GM10248 (cell line): ENCODE measurements at regions of chr1 and their contacts with region 1.

Region 1: DNA sequence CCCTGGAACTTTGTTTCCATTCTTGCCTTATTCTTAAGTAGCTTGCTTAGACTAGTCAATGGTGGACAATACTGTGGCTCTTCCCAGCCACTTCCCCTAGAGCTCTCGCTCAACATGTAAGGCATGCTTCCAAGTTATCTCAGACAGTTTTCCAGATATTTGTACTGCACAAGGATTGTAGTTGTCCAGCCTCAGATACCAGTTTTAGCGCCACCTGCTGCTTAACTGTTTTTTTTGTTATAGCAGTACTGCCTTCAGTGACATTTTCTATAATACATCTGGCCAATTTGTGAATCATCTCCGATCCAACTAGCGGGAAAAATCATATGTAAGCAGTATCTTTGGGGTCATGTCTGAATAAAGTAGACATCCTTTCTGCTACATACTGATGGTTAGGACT is 346.7 kb upstream of the ADGRL4 start:
- DNase-seq: peak; percentile 9
- CTCF ChIP-seq: peak; percentile 22

Region 2: GRCh38 chr1:78839704-78840277 is 513.4 kb before region 1 on chr1:
- CTCF ChIA-PET with region 1: interaction called, 24 read pairs
- POLR2A ChIA-PET with region 1: no interaction called
- DNase-seq: peak; percentile 28
- CTCF ChIP-seq: peak; percentile 56

Region 3: GRCh38 chr1:79193211-79194079 is 159.8 kb before region 1 on chr1:
- CTCF ChIA-PET with region 1: no interaction called
- POLR2A ChIA-PET with region 1: no interaction called
- DNase-seq: no peak
- CTCF ChIP-seq: no peak

Region 4: DNA sequence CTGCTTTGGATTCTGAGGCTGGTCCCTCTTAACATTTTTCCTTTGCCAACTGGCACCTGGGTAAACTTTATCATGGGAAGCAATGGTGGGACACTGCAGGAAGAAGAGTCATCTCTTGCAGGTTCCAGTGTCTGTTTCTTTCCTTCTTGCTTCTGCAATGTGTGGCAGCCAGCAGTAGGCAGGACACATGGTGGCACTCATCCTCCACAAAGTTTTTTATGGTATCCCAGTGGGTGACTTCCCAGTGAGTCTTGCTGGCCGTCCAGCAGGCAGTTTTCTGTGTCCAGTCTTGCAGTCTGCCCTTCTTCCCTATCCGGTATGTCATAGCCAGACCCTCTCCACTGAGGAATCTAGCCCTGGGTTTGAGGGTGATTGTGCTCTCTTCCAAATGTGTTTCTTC is 21.5 kb before region 1 on chr1:
- CTCF ChIA-PET with region 1: interaction called, 12 read pairs
- POLR2A ChIA-PET with region 1: no interaction called
- DNase-seq: no peak
- CTCF ChIP-seq: no peak

Region 5: GRCh38 chr1:79369091-79369490 is 15.9 kb after region 1 on chr1:
- CTCF ChIA-PET with region 1: interaction called, 19 read pairs
- POLR2A ChIA-PET with region 1: no interaction called
- DNase-seq: no peak
- CTCF ChIP-seq: no peak